ENCODE measurements at regions of chr7 and their contacts with region 1.

Region 1: DNA sequence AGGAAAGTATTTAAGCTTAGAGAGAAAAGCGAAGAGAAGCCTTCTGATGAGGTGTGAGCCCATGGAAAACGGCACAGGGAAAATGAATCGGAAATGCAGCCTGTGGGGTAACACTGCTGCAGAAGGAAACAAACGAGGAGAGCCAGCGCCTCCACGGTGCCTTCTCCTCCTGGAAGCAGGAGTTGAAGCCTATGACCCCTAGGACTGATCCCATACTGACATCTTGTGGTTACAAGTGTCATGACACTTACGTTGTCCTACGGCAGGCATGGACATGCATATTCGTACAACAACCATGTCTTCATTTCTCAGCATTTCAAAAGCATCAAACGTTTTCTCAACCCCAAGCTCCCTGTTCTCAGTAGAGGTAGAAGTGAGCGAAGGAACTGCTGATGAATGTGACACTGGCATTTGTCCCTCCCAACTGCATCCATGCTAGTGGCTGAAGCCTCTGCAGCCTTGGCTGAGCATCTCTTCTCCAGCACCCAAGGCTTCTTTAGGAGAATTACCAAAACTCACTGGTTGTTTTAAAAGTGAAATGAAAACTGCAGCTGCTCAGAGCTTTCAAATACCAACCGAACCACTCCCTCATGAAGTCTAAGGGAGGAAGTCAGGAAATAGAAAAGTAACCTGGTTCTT is 160.2 kb downstream of the JAZF1 start:
- DNase-seq: peak; percentile 75
- H3K4me3 Mint-ChIP-seq: no peak overlapping the region
- H3K27ac Mint-ChIP-seq: no peak overlapping the region
- H3K4me1 Mint-ChIP-seq: peaks cover 9% of the 10 kb centered on the region
- H3K27me3 Mint-ChIP-seq: no peaks in the 10 kb centered on the region
- CTCF ChIP-seq: peak; percentile 84

Region 2: DNA sequence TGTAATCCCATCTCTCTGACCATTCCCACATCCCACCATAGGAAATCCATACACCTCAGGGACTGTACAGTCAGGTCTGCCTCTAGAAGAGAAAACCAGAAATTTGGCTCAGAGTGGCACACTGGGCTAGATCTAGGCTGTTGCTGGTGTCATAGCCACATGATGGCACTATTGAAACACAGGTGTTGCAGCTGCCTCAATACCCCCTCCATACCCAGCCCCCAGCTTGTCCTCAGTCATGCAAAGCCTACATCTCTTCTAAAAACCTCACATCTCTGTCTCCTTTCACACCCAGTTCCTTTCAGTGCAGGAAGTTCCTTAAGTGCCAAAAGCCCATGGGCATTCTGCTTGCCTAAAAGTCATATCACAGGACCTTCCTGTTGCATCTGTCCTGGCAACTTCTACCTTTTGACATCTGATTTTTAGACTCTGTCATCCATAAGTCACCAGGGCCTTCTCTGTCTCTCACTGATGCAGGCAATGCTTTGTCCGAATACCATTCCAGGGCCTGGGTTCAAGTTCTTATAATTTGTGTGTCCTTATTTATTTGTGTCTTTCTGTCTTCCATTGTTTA is 330.7 kb before region 1 on chr7:
- CTCF ChIA-PET with region 1: no interaction called
- intact Hi-C with region 1: loop called (anchors 5 kb)
- DNase-seq: peak; percentile 69
- H3K4me3 Mint-ChIP-seq: no peak overlapping the region
- H3K27ac Mint-ChIP-seq: no peak overlapping the region
- H3K4me1 Mint-ChIP-seq: peaks cover 26% of the 10 kb centered on the region
- H3K27me3 Mint-ChIP-seq: no peaks in the 10 kb centered on the region
- CTCF ChIP-seq: peak; percentile 74

Region 3: GRCh38 chr7:27834179-27834921 is 186.1 kb before region 1 on chr7:
- CTCF ChIA-PET with region 1: no interaction called
- intact Hi-C with region 1: loop called (anchors 10 kb)
- DNase-seq: no peak
- H3K4me3 Mint-ChIP-seq: no peak overlapping the region
- H3K27ac Mint-ChIP-seq: no peak overlapping the region
- H3K4me1 Mint-ChIP-seq: no peaks in the 10 kb centered on the region
- H3K27me3 Mint-ChIP-seq: no peaks in the 10 kb centered on the region
- CTCF ChIP-seq: no peak

Region 4: DNA sequence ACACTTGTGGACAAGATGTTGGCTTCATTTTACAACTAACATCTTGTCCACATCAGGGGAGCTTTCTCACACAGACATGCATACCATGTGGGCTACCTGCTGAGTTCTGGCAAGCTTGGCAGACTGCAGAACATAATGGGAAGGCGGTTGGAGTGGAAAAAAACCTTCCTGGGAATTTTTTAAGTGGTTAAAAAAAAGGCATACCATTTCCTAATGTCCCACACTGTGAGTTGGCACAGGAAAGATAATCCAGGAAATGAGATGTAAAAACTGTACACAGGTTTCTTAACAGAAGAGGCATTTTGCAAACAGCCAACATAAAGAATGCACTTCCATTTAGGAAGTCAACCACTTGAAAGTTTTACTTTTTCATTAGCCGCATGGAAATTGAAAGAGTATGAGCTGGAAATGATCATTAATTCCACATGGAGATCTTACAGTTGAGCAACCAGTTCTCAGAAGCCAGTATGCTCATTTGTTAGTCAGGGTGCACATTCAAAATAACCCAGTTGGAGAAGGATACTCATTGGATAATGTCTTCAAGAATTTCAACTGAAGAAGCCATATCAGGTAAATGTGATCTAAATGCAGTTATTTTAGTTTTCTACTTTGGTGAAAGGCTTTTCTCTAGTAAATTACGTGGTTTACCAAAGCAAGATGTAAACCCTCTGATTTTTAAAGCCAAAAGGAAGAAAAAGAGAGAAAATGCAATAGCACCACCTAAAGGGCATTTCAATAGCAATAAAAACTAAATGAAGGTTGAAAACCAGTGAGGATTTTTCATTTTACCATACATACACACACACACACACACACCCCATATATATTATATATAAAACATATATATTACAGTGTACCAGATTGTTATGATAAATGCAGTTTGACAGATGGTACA is 86.5 kb before region 1 on chr7:
- CTCF ChIA-PET with region 1: no interaction called
- intact Hi-C with region 1: loop called (anchors 5 kb)
- DNase-seq: no peak
- H3K4me3 Mint-ChIP-seq: no peak overlapping the region
- H3K27ac Mint-ChIP-seq: no peak overlapping the region
- H3K4me1 Mint-ChIP-seq: no peaks in the 10 kb centered on the region
- H3K27me3 Mint-ChIP-seq: no peaks in the 10 kb centered on the region
- CTCF ChIP-seq: peak; percentile 60